Stomach (tissue), 19 donors: ENCODE measurements at regions of chr20 and their contacts with region 1.

Region 1: DNA sequence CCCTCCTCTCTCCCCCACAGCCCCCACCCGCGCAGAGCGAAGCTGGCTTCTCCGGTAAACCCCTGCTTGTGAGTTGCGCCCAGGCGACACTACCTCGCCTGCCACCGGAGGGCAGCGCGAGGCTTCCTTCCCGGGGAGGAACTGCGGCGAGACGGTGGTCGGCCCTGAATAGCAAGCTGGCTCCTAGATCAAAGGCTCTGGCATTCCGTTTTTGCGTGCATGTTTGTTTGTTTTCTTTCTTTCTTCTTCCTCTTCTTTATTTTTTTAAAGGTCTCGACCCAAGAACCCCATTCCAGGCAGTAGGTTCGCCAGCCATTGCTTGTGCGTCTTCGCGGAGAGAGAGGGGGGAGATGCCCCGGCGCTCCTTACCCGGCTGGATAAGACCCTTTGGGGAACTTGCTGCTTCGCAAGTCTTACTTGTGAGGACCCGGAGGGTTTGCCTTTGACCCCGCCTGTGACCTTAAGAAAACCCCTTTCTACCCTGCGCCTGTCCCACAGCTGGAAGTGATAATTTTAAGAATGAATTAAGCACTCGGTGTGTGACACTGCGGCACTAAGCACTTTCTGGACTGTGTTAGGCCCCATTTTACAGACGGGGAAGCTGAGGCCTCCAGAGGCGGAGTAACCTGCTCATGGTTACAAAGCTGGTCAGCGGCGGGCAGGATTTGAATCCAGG is 92.7 kb upstream of the SIRPA start:
- DNase-seq: peak in 1 of 2 donors; percentile 87
- H3K4me3 ChIP-seq: peak overlapping the region; percentile 52 to 63 (median 54)
- H3K27ac ChIP-seq: peak overlapping the region; percentile 30 to 86 (median 75)
- H3K4me1 ChIP-seq: peaks cover 10 to 38% (median 24%) of the 10 kb centered on the region in 4 donors
- H3K27me3 ChIP-seq: peaks cover 0 to 48% (median 35%) of the 10 kb centered on the region in 3 donors
- CTCF ChIP-seq: peak in 5 of 7 experiments; percentile 21 to 48 (median 39)
- EP300 ChIP-seq: no peak
- POLR2A ChIP-seq: no peak

Region 2: GRCh38 chr20:1313236-1313964 is 489.1 kb before region 1 on chr20:
- intact Hi-C with region 1: no loop called
- DNase-seq: peak; percentile 77 to 92
- H3K4me3 ChIP-seq: peak overlapping the region in 3 of 4 donors; percentile 20 to 34 (median 31)
- H3K27ac ChIP-seq: peak overlapping the region in 1 of 5 donors; percentile 6
- H3K4me1 ChIP-seq: peaks cover 4 to 13% (median 10%) of the 10 kb centered on the region in 4 donors
- H3K27me3 ChIP-seq: no peaks in the 10 kb centered on the region
- CTCF ChIP-seq: peak in 5 of 7 experiments; percentile 91 to 99 (median 95)
- EP300 ChIP-seq: no peak
- POLR2A ChIP-seq: no peak

Region 3: GRCh38 chr20:1427457-1428054 is 375.0 kb before region 1 on chr20:
- intact Hi-C with region 1: no loop called
- DNase-seq: no peak
- H3K4me3 ChIP-seq: no peak overlapping the region
- H3K27ac ChIP-seq: no peak overlapping the region
- H3K4me1 ChIP-seq: no peaks in the 10 kb centered on the region
- H3K27me3 ChIP-seq: peaks cover 0 to 14% (median 0%) of the 10 kb centered on the region in 3 donors
- CTCF ChIP-seq: no peak
- EP300 ChIP-seq: no peak
- POLR2A ChIP-seq: no peak

Region 4: DNA sequence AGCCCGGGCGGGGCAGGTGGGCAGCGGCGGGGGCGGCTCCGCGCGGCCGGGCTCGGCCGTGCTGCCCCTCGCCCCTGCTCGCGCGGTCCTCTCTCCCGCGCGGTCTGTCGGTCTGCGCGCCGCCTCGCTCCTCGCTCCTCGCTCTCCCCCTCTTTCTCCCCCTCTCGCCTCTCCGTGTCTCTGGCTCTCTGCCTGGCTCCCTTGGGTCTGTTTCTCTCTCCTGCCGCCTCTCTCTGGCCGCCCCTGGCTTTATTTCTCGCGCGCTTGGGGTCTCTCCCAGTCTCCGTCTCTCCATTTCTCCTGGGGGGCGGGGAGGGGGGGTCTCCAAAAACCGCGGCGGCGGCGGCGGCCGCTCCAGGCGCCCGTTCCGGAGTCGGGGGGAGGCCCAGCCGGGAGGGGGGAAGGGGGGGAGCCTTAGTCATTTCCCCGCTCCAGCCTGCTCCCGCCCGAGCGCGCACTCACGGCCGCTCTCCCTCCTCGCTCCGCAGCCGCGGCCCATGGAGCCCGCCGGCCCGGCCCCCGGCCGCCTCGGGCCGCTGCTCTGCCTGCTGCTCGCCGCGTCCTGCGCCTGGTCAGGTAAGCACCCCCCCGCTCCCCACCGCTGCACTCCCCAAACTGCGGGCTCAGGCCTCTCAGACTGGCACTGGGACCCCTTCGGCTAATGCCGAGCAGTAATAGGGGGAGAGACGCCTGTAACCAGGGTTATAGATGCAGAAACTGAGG is 92.6 kb after region 1 on chr20 and contains the start of gene SIRPA:
- intact Hi-C with region 1: loop called (anchors 10 kb)
- DNase-seq: peak; percentile 55 to 91
- H3K4me3 ChIP-seq: peak within 1 kb of the TSS; percentile 67 to 74 (median 70)
- H3K27ac ChIP-seq: peak within 1 kb of the TSS; percentile 74 to 96 (median 92)
- H3K4me1 ChIP-seq: peaks cover 11 to 74% (median 50%) of the 10 kb centered on the region in 4 donors
- H3K27me3 ChIP-seq: peaks cover 0 to 13% (median 0%) of the 10 kb centered on the region in 3 donors
- CTCF ChIP-seq: no peak
- EP300 ChIP-seq: no peak
- POLR2A ChIP-seq: no peak
- total RNA-seq, gene SIRPA: 0.29 to 35.5 (median 8.8) TPM